Activated CD4-positive, alpha-beta memory T cell treated with anti-CD3 and anti-CD28 coated beads, Interleukin-2, amount 10 ng/mL, durations not matched to agents 7 days and 5 days (primary cell): ENCODE measurements at regions of chr12 and their contacts with region 1.

Region 1: GRCh38 chr12:71840231-71840847 is 780 bp downstream of the TBC1D15 start:
- DNase-seq: peak; percentile 22
- H3K4me3 Mint-ChIP-seq: peak overlapping the region; percentile 92
- H3K27ac Mint-ChIP-seq: peak overlapping the region; percentile 97
- H3K4me1 Mint-ChIP-seq: peaks cover 37% of the 10 kb centered on the region
- H3K27me3 Mint-ChIP-seq: no peaks in the 10 kb centered on the region

Region 2: DNA sequence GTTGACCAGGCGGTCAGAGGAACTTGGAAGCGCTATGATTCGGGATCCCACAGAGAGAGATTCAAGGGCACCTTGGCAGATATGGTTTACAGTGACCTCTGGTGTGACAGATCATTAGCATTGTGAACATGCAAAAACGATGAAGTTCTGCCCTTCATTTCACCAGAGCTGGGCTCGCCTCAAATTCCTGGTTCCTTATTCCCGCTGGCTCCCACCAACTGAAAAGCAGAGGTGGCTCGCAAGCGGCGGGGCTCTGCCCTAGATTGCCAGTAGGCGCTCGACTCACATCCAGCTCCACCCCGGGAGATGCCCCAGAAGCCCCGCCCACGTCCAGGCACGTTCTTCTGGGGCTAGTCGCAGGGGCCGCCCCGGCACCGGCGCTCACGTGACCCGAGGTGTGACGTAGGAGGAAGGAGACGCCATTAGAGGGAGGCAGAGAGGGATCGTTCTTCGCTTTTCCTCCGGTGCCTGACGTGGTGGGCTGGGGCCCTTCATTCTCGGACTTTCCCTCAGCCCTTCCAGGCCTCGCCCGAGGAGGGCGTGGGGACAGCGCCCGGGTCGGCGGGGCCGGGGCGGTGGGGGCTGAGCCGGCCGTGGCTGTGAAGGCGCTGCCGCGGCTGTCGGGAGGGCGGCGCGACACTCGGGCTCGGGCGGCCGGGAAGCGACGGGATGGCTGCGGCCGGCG is 85.7 kb before region 1 on chr12 and contains the start of gene RAB21:
- CTCF ChIA-PET with region 1: interaction called, 4 read pairs
- POLR2A ChIA-PET with region 1: interaction called, 30 read pairs
- DNase-seq: peak; percentile 99
- H3K4me3 Mint-ChIP-seq: peak within 1 kb of the TSS; percentile 88
- H3K27ac Mint-ChIP-seq: peak within 1 kb of the TSS; percentile 90
- H3K4me1 Mint-ChIP-seq: peaks cover 31% of the 10 kb centered on the region
- H3K27me3 Mint-ChIP-seq: peaks cover 21% of the 10 kb centered on the region
- total RNA-seq, gene RAB21: 65.0 to 67.3 TPM